Posterior vena cava (tissue), 2 donors: ENCODE measurements at regions of chr9 and their contacts with region 1.

Region 1: GRCh38 chr9:114448706-114449105 is 56.6 kb downstream of the WHRN start:
- DNase-seq: no peak

Region 2: GRCh38 chr9:114938687-114939575 is 490.2 kb after region 1 on chr9:
- intact Hi-C with region 1: loop called in 1 of 2 experiments (anchors 5 kb)
- DNase-seq: no peak